Dendritic cell treated with granulocyte-macrophage colony-stimulating factor and Interleukin-4, amounts not matched to agents 40 ng/mL and 50 ng/mL, for 4 days (primary cell): ENCODE measurements at regions of chr2 and their contacts with region 1.

Region 1: GRCh38 chr2:63310614-63311013 is 260.0 kb downstream of the OTX1 start:
- H3K4me3 Mint-ChIP-seq: no peak overlapping the region
- H3K27ac Mint-ChIP-seq: no peak overlapping the region
- H3K4me1 Mint-ChIP-seq: no peaks in the 10 kb centered on the region
- H3K27me3 Mint-ChIP-seq: no peaks in the 10 kb centered on the region

Region 2: GRCh38 chr2:63035660-63036059 is 275.0 kb before region 1 on chr2:
- intact Hi-C with region 1: loop called (anchors 5 kb)
- H3K4me3 Mint-ChIP-seq: no peak overlapping the region
- H3K27ac Mint-ChIP-seq: no peak overlapping the region
- H3K4me1 Mint-ChIP-seq: no peaks in the 10 kb centered on the region
- H3K27me3 Mint-ChIP-seq: no peaks in the 10 kb centered on the region